ENCODE measurements at regions of chr17 and their contacts with region 1.

Region 1: GRCh38 chr17:59914274-59914854 is 21.4 kb downstream of the RPS6KB1 start:
- DNase-seq: no peak
- H3K4me3 ChIP-seq: no peak overlapping the region
- H3K27ac ChIP-seq: no peak overlapping the region
- H3K4me1 ChIP-seq: no peaks in the 10 kb centered on the region
- H3K27me3 ChIP-seq: no peaks in the 10 kb centered on the region
- CTCF ChIP-seq: peak; percentile 50 to 68 (median 51)
- EP300 ChIP-seq: no peak
- POLR2A ChIP-seq: no peak

Region 2: GRCh38 chr17:59950049-59950448 is 35.7 kb after region 1 on chr17:
- intact Hi-C with region 1: no loop called
- DNase-seq: no peak
- H3K4me3 ChIP-seq: no peak overlapping the region
- H3K27ac ChIP-seq: no peak overlapping the region
- H3K4me1 ChIP-seq: no peaks in the 10 kb centered on the region
- H3K27me3 ChIP-seq: no peaks in the 10 kb centered on the region
- CTCF ChIP-seq: no peak
- EP300 ChIP-seq: no peak
- POLR2A ChIP-seq: no peak

Region 3: GRCh38 chr17:59972778-59973177 is 58.4 kb after region 1 on chr17:
- intact Hi-C with region 1: no loop called
- DNase-seq: no peak
- H3K4me3 ChIP-seq: no peak overlapping the region
- H3K27ac ChIP-seq: no peak overlapping the region
- H3K4me1 ChIP-seq: no peaks in the 10 kb centered on the region
- H3K27me3 ChIP-seq: no peaks in the 10 kb centered on the region
- CTCF ChIP-seq: no peak
- EP300 ChIP-seq: no peak
- POLR2A ChIP-seq: no peak

Region 4: DNA sequence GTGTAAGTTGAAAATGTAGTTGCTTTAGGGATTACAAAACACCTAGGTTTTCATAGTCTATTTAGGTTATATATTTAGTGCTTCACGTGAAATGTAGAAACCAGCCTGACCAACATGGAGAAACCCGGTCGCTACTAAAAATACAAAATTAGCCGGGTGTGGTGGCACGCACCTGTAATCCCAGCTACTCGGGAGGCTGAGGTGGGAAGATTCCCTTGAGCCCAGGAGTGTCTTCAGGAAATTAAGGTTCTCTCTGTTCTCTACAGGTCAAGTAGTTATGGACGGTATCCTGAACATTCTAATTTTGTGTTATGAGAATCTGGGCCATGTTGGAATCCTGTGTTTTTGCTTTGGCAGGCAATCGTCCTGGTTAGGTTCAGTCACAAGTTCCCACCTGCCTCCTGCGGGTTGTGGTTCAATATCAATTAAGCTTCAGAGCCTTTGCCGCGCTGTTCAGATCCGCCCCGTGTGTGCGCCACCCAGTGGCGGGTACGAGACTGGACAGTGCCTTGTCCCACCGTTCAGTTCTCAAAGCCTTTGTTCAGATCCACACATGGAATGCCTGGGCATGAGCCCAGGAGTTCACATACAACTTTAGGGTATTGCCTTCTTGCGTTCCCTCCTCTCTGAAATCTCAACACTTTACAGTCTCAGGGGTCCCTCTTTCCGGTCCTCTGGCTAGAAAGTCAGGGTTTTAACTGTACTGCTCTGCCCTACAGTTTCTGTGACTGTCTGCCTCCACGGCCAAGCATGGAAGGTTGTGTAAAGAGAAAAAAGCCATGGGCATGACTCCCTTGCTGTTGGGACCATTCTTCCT is 122.6 kb after region 1 on chr17:
- intact Hi-C with region 1: loop called in 2 of 4 experiments (anchors 5 to 10 kb)
- DNase-seq: peak; percentile 41 to 77 (median 65)
- H3K4me3 ChIP-seq: no peak overlapping the region
- H3K27ac ChIP-seq: no peak overlapping the region
- H3K4me1 ChIP-seq: peaks cover 1% of the 10 kb centered on the region
- H3K27me3 ChIP-seq: no peaks in the 10 kb centered on the region
- CTCF ChIP-seq: peak; percentile 43 to 54 (median 52)
- EP300 ChIP-seq: no peak
- POLR2A ChIP-seq: no peak

Region 5: DNA sequence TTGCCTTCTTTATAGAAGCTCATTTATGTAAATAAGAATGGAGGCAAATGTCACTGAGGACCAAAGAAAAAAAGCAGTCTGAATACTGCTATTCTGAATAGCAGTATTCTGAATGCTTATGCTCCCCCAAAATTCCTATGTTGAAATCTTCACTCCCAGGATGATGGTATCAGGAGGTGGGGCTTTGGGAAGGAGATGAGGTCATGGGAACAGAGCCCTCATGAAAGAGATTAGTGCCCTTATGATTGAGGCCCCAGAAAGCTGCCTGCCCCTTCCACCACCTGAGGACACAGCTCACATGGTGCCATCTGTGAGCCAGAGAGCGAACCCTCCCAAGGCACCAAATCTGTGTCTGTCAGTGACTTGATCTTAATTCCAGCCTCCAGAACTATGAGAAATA is 135.6 kb after region 1 on chr17:
- intact Hi-C with region 1: loop called in 1 of 4 experiments (anchors 10 kb)
- DNase-seq: no peak
- H3K4me3 ChIP-seq: no peak overlapping the region
- H3K27ac ChIP-seq: no peak overlapping the region
- H3K4me1 ChIP-seq: no peaks in the 10 kb centered on the region
- H3K27me3 ChIP-seq: no peaks in the 10 kb centered on the region
- CTCF ChIP-seq: no peak
- EP300 ChIP-seq: no peak
- POLR2A ChIP-seq: no peak